MCF 10A (cell line): ENCODE measurements at regions of chr4 and their contacts with region 1.

Region 1: GRCh38 chr4:156941940-156942548 is 29.6 kb downstream of the PDGFC start:
- DNase-seq: peak; percentile 77
- H3K4me3 Mint-ChIP-seq: no peak overlapping the region
- H3K27ac Mint-ChIP-seq: peak overlapping the region; percentile 12
- H3K4me1 Mint-ChIP-seq: peaks cover 48% of the 10 kb centered on the region
- H3K27me3 Mint-ChIP-seq: no peaks in the 10 kb centered on the region
- CTCF ChIP-seq: no peak

Region 2: DNA sequence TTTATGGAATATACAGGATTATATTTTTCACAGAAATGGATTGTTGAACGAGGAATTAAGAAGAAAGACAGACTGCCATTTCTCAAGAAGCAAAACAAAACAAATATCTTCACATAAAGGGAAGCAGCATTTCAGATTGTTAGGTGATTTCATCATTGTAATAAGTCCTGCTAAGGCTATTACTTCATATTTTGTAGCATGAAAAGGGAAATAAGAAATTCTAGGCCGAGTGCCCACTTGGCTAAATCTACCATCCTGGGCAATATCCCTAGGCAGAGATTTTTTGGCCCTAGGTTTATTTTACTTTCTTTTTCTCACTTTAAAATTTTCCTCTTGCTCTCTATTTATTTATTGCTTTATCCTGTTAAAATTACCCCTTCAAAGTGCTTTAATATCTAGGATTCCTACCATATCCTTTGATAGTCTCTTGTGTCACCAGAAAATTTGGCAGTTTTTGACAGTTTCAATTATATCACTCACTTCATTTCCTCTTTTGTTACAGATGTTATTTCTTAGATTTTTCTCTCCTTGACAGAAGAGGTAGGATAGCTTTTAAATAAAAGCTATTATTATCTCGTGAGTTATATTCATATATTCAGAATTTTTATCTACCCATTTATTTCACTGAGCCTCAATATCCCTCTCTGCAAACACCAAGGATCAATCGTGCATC is 112.7 kb before region 1 on chr4:
- CTCF ChIA-PET with region 1: interaction called, 10 read pairs
- POLR2A ChIA-PET with region 1: interaction called, 16 read pairs
- intact Hi-C with region 1: loop called (anchors 5 kb)
- DNase-seq: peak; percentile 81
- H3K4me3 Mint-ChIP-seq: peak overlapping the region; percentile 67
- H3K27ac Mint-ChIP-seq: peak overlapping the region; percentile 94
- H3K4me1 Mint-ChIP-seq: peaks cover 35% of the 10 kb centered on the region
- H3K27me3 Mint-ChIP-seq: no peaks in the 10 kb centered on the region
- CTCF ChIP-seq: no peak

Region 3: GRCh38 chr4:156889616-156890594 is 52.1 kb before region 1 on chr4:
- CTCF ChIA-PET with region 1: interaction called, 4 read pairs
- POLR2A ChIA-PET with region 1: interaction called, 14 read pairs
- intact Hi-C with region 1: no loop called
- DNase-seq: peak; percentile 71
- H3K4me3 Mint-ChIP-seq: peak overlapping the region; percentile 2
- H3K27ac Mint-ChIP-seq: peak overlapping the region; percentile 72
- H3K4me1 Mint-ChIP-seq: peaks cover 32% of the 10 kb centered on the region
- H3K27me3 Mint-ChIP-seq: no peaks in the 10 kb centered on the region
- CTCF ChIP-seq: no peak

Region 4: GRCh38 chr4:156931267-156931666 is 10.8 kb before region 1 on chr4:
- CTCF ChIA-PET with region 1: interaction called, 6 read pairs
- POLR2A ChIA-PET with region 1: interaction called, 15 read pairs
- intact Hi-C with region 1: no loop called
- DNase-seq: peak; percentile 95
- H3K4me3 Mint-ChIP-seq: no peak overlapping the region
- H3K27ac Mint-ChIP-seq: peak overlapping the region; percentile 86
- H3K4me1 Mint-ChIP-seq: peaks cover 35% of the 10 kb centered on the region
- H3K27me3 Mint-ChIP-seq: no peaks in the 10 kb centered on the region
- CTCF ChIP-seq: no peak

Region 5: DNA sequence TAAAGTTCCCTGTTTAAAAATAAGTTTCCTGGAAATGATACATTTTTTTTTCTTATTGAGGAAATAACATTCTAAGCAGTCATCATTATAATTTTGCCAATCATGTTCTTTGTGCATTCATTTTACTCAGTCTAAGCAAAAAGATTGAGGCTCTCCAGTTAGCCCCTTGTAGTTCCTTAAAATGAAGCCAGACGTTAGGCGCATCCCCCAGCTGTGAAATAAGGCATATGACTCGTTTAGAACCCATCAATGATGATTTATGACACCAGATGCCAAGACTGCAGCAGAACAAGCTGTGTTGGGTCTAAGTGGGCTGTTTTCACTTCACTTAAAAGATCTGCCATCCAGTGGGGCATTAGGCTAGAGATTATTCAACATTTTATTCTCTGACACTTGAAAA is 12.5 kb after region 1 on chr4:
- CTCF ChIA-PET with region 1: no interaction called
- POLR2A ChIA-PET with region 1: interaction called, 39 read pairs
- intact Hi-C with region 1: no loop called
- DNase-seq: no peak
- H3K4me3 Mint-ChIP-seq: no peak overlapping the region
- H3K27ac Mint-ChIP-seq: no peak overlapping the region
- H3K4me1 Mint-ChIP-seq: peaks cover 62% of the 10 kb centered on the region
- H3K27me3 Mint-ChIP-seq: no peaks in the 10 kb centered on the region
- CTCF ChIP-seq: no peak